ENCODE measurements at regions of chr10 and their contacts with region 1.

Region 1: GRCh38 chr10:96073722-96074121 is 30.3 kb downstream of the CCNJ start:
- DNase-seq: peak; percentile 78
- H3K4me3 ChIP-seq: no peak overlapping the region
- H3K27ac ChIP-seq: peak overlapping the region; percentile 57
- H3K4me1 ChIP-seq: peaks cover 27% of the 10 kb centered on the region
- H3K27me3 ChIP-seq: no peaks in the 10 kb centered on the region
- CTCF ChIP-seq: no peak
- POLR2A ChIP-seq: no peak

Region 2: DNA sequence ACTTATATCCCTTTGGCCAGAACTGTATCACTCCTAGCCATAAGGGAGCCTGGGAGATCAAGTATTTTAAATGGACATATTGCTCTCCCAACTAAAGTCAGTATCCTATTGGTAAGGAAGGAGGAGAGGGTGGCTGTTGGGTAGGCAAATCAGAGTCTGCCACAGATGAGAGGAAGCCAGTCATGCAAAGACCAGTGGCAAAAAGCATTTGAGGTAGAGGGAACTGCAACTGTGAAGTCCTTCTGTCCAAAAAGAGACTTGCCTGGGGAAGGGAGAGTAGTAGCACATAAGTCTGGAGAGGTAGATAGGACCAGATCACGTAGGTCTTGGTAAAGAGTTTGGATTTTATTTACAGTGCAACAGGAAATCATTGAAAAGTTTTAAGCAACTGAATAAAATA is 39.1 kb before region 1 on chr10:
- CTCF ChIA-PET with region 1: no interaction called
- POLR2A ChIA-PET with region 1: no interaction called
- dilution Hi-C with region 1: no loop called
- intact Hi-C with region 1: no loop called
- DNase-seq: no peak
- H3K4me3 ChIP-seq: no peak overlapping the region
- H3K27ac ChIP-seq: no peak overlapping the region
- H3K4me1 ChIP-seq: peaks cover 13% of the 10 kb centered on the region
- H3K27me3 ChIP-seq: peaks cover 0 to 7% of the 10 kb centered on the region in 2 experiments
- CTCF ChIP-seq: no peak
- POLR2A ChIP-seq: no peak

Region 3: DNA sequence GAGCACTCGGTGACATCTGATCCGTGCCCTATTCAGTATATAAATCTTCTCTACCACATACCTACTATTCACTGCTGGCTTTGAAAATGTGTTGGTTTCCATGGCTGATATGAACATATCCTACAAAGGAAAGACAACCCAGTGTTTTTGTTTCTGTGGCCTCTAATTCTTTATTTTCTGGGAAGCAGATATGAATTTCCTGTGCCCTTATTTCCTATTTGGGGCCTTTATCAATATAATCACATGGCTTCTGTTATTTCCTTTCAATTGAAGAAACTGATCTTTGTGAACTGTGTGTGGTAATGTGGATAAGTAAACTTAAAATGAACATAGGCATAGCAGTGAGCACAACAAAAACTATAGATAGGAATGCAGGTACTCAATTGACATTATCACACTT is 19.7 kb before region 1 on chr10:
- CTCF ChIA-PET with region 1: interaction called, 3 read pairs
- POLR2A ChIA-PET with region 1: interaction called, 3 read pairs
- dilution Hi-C with region 1: no loop called
- intact Hi-C with region 1: loop called (anchors 1 kb)
- DNase-seq: peak; percentile 92
- H3K4me3 ChIP-seq: peak overlapping the region in 1 of 3 experiments; percentile 15
- H3K27ac ChIP-seq: peak overlapping the region; percentile 74
- H3K4me1 ChIP-seq: peaks cover 44% of the 10 kb centered on the region
- H3K27me3 ChIP-seq: no peaks in the 10 kb centered on the region
- CTCF ChIP-seq: no peak
- POLR2A ChIP-seq: no peak

Region 4: GRCh38 chr10:96061232-96061631 is 12.5 kb before region 1 on chr10:
- CTCF ChIA-PET with region 1: interaction called, 3 read pairs
- POLR2A ChIA-PET with region 1: no interaction called
- dilution Hi-C with region 1: no loop called
- intact Hi-C with region 1: loop called (anchors 1 kb)
- DNase-seq: no peak
- H3K4me3 ChIP-seq: no peak overlapping the region
- H3K27ac ChIP-seq: no peak overlapping the region
- H3K4me1 ChIP-seq: peaks cover 6% of the 10 kb centered on the region
- H3K27me3 ChIP-seq: no peaks in the 10 kb centered on the region
- CTCF ChIP-seq: no peak
- POLR2A ChIP-seq: no peak

Region 5: GRCh38 chr10:96089670-96090462 is 16.1 kb after region 1 on chr10:
- CTCF ChIA-PET with region 1: interaction called, 3 read pairs
- POLR2A ChIA-PET with region 1: interaction called, 4 read pairs
- dilution Hi-C with region 1: no loop called
- intact Hi-C with region 1: loop called (anchors 1 kb)
- DNase-seq: peak; percentile 86
- H3K4me3 ChIP-seq: peak overlapping the region; percentile 40 to 67 (median 67)
- H3K27ac ChIP-seq: peak overlapping the region; percentile 84
- H3K4me1 ChIP-seq: peaks cover 4% of the 10 kb centered on the region
- H3K27me3 ChIP-seq: peaks cover 19 to 23% of the 10 kb centered on the region in 2 experiments
- CTCF ChIP-seq: no peak
- POLR2A ChIP-seq: peak; percentile 66

Region 6: GRCh38 chr10:96292971-96293920 is 219.5 kb after region 1 on chr10:
- CTCF ChIA-PET with region 1: no interaction called
- POLR2A ChIA-PET with region 1: no interaction called
- dilution Hi-C with region 1: no loop called
- intact Hi-C with region 1: no loop called
- DNase-seq: peak; percentile 52
- H3K4me3 ChIP-seq: no peak overlapping the region
- H3K27ac ChIP-seq: no peak overlapping the region
- H3K4me1 ChIP-seq: no peaks in the 10 kb centered on the region
- H3K27me3 ChIP-seq: peaks cover 9 to 30% of the 10 kb centered on the region in 2 experiments
- CTCF ChIP-seq: peak; percentile 33 to 41
- POLR2A ChIP-seq: no peak

Measured in endothelial cell of umbilical vein (primary cell).